Heart right ventricle (tissue), 16 donors: ENCODE measurements at regions of chr4 and their contacts with region 1.

Region 1: DNA sequence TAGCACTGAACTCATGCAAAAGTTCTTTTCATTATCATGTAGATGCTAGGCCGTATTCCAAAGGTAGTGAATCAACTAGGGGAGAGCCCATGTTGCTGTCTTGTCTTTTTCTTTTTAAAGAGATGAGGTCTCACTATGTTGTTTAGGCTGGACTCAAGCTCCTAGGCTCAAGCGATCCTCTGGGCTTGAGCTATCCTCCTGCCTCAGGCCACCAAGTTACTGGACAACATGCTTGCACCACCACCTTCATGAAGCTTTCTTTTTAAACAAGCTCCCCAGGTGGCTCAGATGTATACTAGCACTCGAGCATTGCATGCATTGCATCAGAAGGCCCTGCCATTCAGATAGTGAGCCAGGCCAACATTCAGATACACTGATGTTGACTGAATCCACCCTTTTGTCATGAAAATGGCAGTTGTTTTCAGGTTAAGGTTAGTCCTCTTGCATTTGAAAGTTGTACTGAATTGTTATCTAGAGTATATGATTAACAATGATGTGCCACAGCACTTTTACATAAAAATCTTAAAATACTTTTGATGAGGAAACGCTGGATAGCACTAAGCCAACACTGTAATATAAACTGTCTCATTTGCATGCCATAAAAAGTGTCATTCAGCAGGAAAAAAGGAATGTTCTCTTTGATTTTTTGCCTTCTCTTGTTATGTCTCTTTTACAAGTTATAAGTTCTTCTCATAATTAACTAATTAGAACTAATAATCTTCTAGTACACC is 76.7 kb downstream of the FNIP2 start:
- DNase-seq: no peak
- ATAC-seq: no peak
- H3K4me3 ChIP-seq: peak overlapping the region in 1 of 10 donors; percentile 13
- H3K27ac ChIP-seq: no peak overlapping the region
- H3K4me1 ChIP-seq: peaks cover 0 to 51% (median 10%) of the 10 kb centered on the region in 9 donors
- H3K27me3 ChIP-seq: no peaks in the 10 kb centered on the region
- CTCF ChIP-seq: no peak

Region 2: GRCh38 chr4:158768555-158769174 is 76.8 kb before region 1 on chr4 and contains the start of gene FNIP2:
- intact Hi-C with region 1: loop called in 7 of 10 experiments (anchors 2 to 5 kb)
- DNase-seq: peak; percentile 85 to 87
- ATAC-seq: peak; percentile 91 to 97 (median 94)
- H3K4me3 ChIP-seq: peak within 1 kb of the TSS; percentile 81 to 93 (median 88)
- H3K27ac ChIP-seq: peak within 1 kb of the TSS; percentile 73 to 95 (median 91)
- H3K4me1 ChIP-seq: peaks cover 8 to 57% (median 43%) of the 10 kb centered on the region in 9 donors
- H3K27me3 ChIP-seq: no peaks in the 10 kb centered on the region
- CTCF ChIP-seq: no peak
- total RNA-seq, gene FNIP2: 34.1 to 89.7 (median 53.4) TPM

Region 3: DNA sequence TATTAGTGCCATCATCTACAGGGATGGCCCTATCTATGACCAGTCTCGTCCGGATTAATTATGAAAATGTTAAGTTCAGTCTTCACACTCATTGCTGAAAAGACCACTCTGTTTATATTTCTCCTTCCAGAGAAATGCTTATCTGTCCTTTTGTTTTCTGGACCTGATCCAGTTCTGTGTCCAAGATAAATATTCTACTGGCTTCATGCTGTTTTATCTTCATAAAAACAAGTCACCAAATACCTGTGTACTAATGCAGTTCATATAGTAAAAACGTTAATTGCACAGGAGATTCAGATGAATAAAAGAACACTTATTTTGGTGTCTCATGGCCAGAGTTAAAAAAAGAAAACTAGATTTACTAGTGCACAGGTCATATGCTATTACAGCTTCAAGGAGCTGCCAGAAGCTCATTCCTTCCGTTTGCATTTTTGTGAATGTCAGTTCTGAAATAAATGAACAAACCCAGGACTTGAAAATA is 59.3 kb before region 1 on chr4:
- intact Hi-C with region 1: loop called in 1 of 10 experiments (anchors 5 kb)
- DNase-seq: no peak
- ATAC-seq: peak in 5 of 8 donors; percentile 37 to 52 (median 48)
- H3K4me3 ChIP-seq: peak overlapping the region in 5 of 10 donors; percentile 6 to 23 (median 21)
- H3K27ac ChIP-seq: peak overlapping the region in 9 of 10 donors; percentile 17 to 79 (median 70)
- H3K4me1 ChIP-seq: peaks cover 16 to 99% (median 85%) of the 10 kb centered on the region in 9 donors
- H3K27me3 ChIP-seq: no peaks in the 10 kb centered on the region
- CTCF ChIP-seq: no peak

Region 4: GRCh38 chr4:158809611-158810486 is 35.6 kb before region 1 on chr4:
- intact Hi-C with region 1: loop called in 1 of 10 experiments (anchors 5 kb)
- DNase-seq: peak in 1 of 2 donors; percentile 43
- ATAC-seq: peak; percentile 42 to 73 (median 62)
- H3K4me3 ChIP-seq: peak overlapping the region in 6 of 10 donors; percentile 1 to 32 (median 6)
- H3K27ac ChIP-seq: peak overlapping the region; percentile 55 to 89 (median 80)
- H3K4me1 ChIP-seq: peaks cover 15 to 97% (median 81%) of the 10 kb centered on the region in 9 donors
- H3K27me3 ChIP-seq: no peaks in the 10 kb centered on the region
- CTCF ChIP-seq: no peak